HCT116 (cell line): ENCODE measurements at regions of chr7 and their contacts with region 1.

Region 1: DNA sequence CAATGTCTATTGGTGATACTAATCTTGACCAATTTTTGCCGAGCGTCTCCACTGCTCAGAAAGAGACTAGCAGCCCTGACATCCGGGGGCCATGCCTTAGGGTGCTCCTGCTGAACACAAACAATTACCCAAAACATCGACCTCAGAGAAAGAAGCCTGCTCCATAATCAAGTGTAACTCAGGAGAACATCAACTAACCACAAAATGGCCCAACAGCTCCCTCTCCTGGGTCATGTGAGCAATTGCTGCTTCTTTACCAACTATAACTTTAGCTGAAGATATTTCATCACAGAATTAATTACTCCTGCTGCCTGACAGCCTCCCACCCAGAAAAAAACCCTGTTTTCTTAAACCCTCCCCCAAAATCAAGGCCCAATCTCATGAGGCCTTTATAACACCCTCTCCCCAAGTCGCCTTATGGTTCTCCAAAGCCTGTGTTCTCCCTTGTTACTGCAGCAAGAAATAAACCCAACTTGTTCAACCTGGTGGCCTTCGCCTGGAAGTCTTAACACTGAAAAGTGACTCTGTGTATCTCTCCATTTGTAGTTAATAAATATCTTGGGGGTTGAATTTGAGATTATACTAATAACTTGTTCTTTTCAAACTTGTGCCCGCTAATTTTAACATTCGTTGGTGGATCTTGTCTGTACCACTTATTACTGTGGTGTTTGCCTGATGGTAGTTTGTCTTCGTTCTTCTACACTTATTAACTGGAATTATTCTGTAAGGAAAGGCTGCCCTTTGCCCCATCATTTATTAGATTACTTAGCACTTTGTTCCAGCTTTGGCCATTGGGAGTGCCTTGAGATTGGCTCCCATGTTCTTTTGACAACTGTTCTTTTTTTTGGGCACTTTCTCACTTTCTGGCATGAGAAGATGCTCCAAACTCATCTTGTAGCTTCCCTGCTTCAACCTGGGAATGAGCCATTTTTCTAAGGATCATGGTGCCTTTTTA is 21.2 kb upstream of the RAMP3 start:
- DNase-seq: peak; percentile 66
- ATAC-seq: peak; percentile 87
- H3K4me3 ChIP-seq: no peak overlapping the region
- H3K27ac ChIP-seq: no peak overlapping the region
- H3K4me1 ChIP-seq: no peaks in the 10 kb centered on the region
- H3K27me3 ChIP-seq: no peaks in the 10 kb centered on the region
- CTCF ChIP-seq: peak; percentile 76 to 91 (median 91)
- POLR2A ChIP-seq: no peak
- RAD21 ChIP-seq: peak; percentile 96

Region 2: GRCh38 chr7:44240983-44241510 is 895.3 kb before region 1 on chr7:
- CTCF ChIA-PET with region 1: no interaction called
- POLR2A ChIA-PET with region 1: no interaction called
- RAD21 ChIA-PET with region 1: no interaction called
- intact Hi-C with region 1: loop called (anchors 5 kb)
- DNase-seq: peak; percentile 66
- ATAC-seq: peak; percentile 98
- H3K4me3 ChIP-seq: no peak overlapping the region
- H3K27ac ChIP-seq: no peak overlapping the region
- H3K4me1 ChIP-seq: peaks cover 0 to 5% of the 10 kb centered on the region in 2 experiments; a peak in 1 of 4 replicates
- H3K27me3 ChIP-seq: no peaks in the 10 kb centered on the region
- CTCF ChIP-seq: peak; percentile 87 to 91 (median 89)
- POLR2A ChIP-seq: no peak
- RAD21 ChIP-seq: peak; percentile 93

Region 3: GRCh38 chr7:44858161-44858560 is 278.2 kb before region 1 on chr7:
- CTCF ChIA-PET with region 1: interaction called, 8 read pairs
- POLR2A ChIA-PET with region 1: no interaction called
- RAD21 ChIA-PET with region 1: interaction called in 1 of 2 experiments, 5 read pairs
- intact Hi-C with region 1: loop called (anchors 1 kb)
- DNase-seq: no peak
- ATAC-seq: no peak
- H3K4me3 ChIP-seq: no peak overlapping the region
- H3K27ac ChIP-seq: no peak overlapping the region
- H3K4me1 ChIP-seq: peaks cover 3 to 31% of the 10 kb centered on the region in 2 experiments; a peak in 3 of 4 replicates
- H3K27me3 ChIP-seq: no peaks in the 10 kb centered on the region
- CTCF ChIP-seq: peak in 2 of 3 experiments; percentile 8 to 22; a peak in 1 of 6 replicates
- POLR2A ChIP-seq: no peak
- RAD21 ChIP-seq: no peak

Region 4: GRCh38 chr7:44921607-44922359 is 214.6 kb before region 1 on chr7:
- CTCF ChIA-PET with region 1: no interaction called
- POLR2A ChIA-PET with region 1: no interaction called
- RAD21 ChIA-PET with region 1: no interaction called
- intact Hi-C with region 1: loop called (anchors 5 kb)
- DNase-seq: peak; percentile 59
- ATAC-seq: peak; percentile 98
- H3K4me3 ChIP-seq: no peak overlapping the region
- H3K27ac ChIP-seq: no peak overlapping the region
- H3K4me1 ChIP-seq: peaks cover 0 to 6% of the 10 kb centered on the region in 2 experiments; a peak in 1 of 4 replicates
- H3K27me3 ChIP-seq: no peaks in the 10 kb centered on the region
- CTCF ChIP-seq: peak; percentile 65 to 89 (median 86)
- POLR2A ChIP-seq: no peak
- RAD21 ChIP-seq: peak; percentile 88

Region 5: GRCh38 chr7:44973610-44974401 is 162.6 kb before region 1 on chr7:
- CTCF ChIA-PET with region 1: interaction called, 114 read pairs
- POLR2A ChIA-PET with region 1: interaction called, 3 read pairs
- RAD21 ChIA-PET with region 1: interaction called, 13 to 28 read pairs
- intact Hi-C with region 1: loop called (anchors 1 kb)
- DNase-seq: no peak
- ATAC-seq: peak; percentile 82
- H3K4me3 ChIP-seq: no peak overlapping the region
- H3K27ac ChIP-seq: no peak overlapping the region
- H3K4me1 ChIP-seq: peaks cover 0 to 3% of the 10 kb centered on the region in 2 experiments; a peak in 1 of 4 replicates
- H3K27me3 ChIP-seq: no peaks in the 10 kb centered on the region
- CTCF ChIP-seq: peak; percentile 56 to 66 (median 58); a peak in 5 of 6 replicates
- POLR2A ChIP-seq: no peak
- RAD21 ChIP-seq: peak; percentile 62

Region 6: GRCh38 chr7:45111298-45112223 is 24.8 kb before region 1 on chr7 and contains the start of gene TBRG4:
- CTCF ChIA-PET with region 1: interaction called, 12 read pairs
- POLR2A ChIA-PET with region 1: no interaction called
- RAD21 ChIA-PET with region 1: no interaction called
- intact Hi-C with region 1: no loop called
- DNase-seq: peak; percentile 89
- ATAC-seq: peak; percentile 90
- H3K4me3 ChIP-seq: peak within 1 kb of the TSS; percentile 89 to 100
- H3K27ac ChIP-seq: peak within 1 kb of the TSS; percentile 87
- H3K4me1 ChIP-seq: peaks cover 11 to 13% of the 10 kb centered on the region in 2 experiments
- H3K27me3 ChIP-seq: no peaks in the 10 kb centered on the region
- CTCF ChIP-seq: peak; percentile 15 to 40 (median 40); a peak in 5 of 6 replicates
- POLR2A ChIP-seq: peak; percentile 86
- RAD21 ChIP-seq: peak; percentile 53
- total RNA-seq, gene TBRG4: 136 TPM